ENCODE measurements at regions of chr2 and their contacts with region 1.

Region 1: DNA sequence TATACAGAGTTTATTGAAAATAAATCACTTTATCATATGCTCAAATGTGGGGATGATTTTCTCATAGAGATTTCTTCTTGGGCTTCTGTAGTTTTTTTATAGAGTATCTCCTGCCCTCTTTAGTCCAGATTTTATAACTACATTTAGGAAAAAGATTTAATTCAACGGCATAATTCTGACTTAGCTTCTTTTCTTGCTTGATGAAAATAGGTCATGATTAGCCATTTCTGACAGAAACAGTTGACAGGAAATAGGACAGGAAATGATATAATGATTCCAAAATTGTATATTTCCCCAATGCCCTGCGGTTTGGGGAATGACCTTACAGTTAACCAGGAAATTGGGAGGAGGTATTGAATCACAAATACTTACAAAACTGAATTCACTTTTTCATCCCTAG is 1531.9 kb upstream of the ACVR2A start:
- DNase-seq: peak; percentile 26
- H3K4me3 Mint-ChIP-seq: no peak overlapping the region
- H3K27ac Mint-ChIP-seq: peak overlapping the region; percentile 22
- H3K4me1 Mint-ChIP-seq: peaks cover 5% of the 10 kb centered on the region
- H3K27me3 Mint-ChIP-seq: no peaks in the 10 kb centered on the region
- CTCF ChIP-seq: peak; percentile 27

Region 2: DNA sequence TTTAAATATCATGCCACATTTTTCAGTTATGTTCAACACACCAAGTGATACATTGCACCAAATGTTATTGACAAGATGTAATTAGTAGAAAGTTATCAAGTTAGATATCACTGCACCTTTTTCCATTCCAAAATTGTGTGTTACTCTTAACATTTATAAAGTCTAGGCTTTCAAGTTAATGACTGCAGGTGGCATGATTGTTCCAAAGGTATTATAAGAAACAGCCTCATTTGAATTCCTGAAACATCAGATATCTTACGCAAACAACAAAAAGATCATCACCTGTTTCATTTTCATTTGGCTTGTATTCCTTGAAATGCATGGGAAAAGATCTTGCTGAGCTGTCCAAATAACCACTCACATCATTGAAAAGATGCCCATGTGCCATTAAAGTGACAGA is 264.8 kb before region 1 on chr2:
- CTCF ChIA-PET with region 1: no interaction called
- POLR2A ChIA-PET with region 1: no interaction called
- intact Hi-C with region 1: loop called (anchors 5 kb)
- DNase-seq: no peak
- H3K4me3 Mint-ChIP-seq: no peak overlapping the region
- H3K27ac Mint-ChIP-seq: no peak overlapping the region
- H3K4me1 Mint-ChIP-seq: no peaks in the 10 kb centered on the region
- H3K27me3 Mint-ChIP-seq: no peaks in the 10 kb centered on the region
- CTCF ChIP-seq: no peak

Region 3: GRCh38 chr2:146523196-146523595 is 210.3 kb after region 1 on chr2:
- CTCF ChIA-PET with region 1: no interaction called
- POLR2A ChIA-PET with region 1: no interaction called
- intact Hi-C with region 1: loop called (anchors 5 kb)
- DNase-seq: peak; percentile 3
- H3K4me3 Mint-ChIP-seq: no peak overlapping the region
- H3K27ac Mint-ChIP-seq: no peak overlapping the region
- H3K4me1 Mint-ChIP-seq: no peaks in the 10 kb centered on the region
- H3K27me3 Mint-ChIP-seq: no peaks in the 10 kb centered on the region
- CTCF ChIP-seq: peak; percentile 44

Measured in MCF 10A (cell line).